Heart right ventricle (tissue), 16 donors: ENCODE measurements at regions of chr16 and their contacts with region 1.

Region 1: DNA sequence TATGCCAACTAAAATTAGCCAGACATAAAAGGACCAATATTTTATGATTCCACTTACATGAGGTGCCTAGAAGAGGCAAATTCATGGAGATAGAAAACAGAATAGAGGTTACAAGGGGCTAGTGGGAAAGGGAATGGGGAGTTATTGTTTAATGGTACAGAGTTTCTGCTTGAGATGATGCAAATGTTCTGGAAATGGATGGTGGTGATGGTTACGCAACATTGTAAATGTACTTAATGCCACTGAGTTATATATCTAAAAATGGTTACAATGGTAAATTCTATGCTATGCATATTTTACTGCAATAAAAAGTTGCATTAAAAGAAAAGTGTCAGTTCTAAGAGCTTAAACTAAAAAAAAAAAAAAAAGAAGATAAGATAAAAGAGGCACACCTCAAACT is 17.9 kb downstream of the MT1X start:
- DNase-seq: no peak
- ATAC-seq: no peak
- H3K4me3 ChIP-seq: no peak overlapping the region
- H3K27ac ChIP-seq: no peak overlapping the region
- H3K4me1 ChIP-seq: peaks cover 0 to 9% (median 0%) of the 10 kb centered on the region in 9 donors
- H3K27me3 ChIP-seq: no peaks in the 10 kb centered on the region
- CTCF ChIP-seq: no peak

Region 2: DNA sequence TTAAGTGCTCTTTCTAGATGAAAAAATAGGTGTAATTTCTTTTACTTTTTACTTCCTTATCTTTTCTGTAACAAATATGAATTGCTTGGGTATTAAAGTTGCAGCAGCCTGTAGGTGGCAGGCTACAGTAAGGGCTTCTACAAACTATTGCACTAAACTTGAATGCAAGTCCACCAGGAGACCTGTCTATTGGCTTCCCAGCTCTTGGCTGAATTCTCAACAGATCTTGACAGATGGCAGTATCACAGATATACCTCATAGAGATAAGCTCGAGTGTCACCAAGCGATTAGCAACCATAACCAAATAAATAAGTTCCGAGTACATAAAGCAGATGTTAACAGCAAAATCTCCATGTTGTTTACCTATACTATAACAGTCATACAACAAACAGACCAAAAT is 186.2 kb before region 1 on chr16:
- intact Hi-C with region 1: loop called (anchors 1 to 10 kb)
- DNase-seq: peak in 1 of 2 donors; percentile 36
- ATAC-seq: peak in 5 of 8 donors; percentile 55 to 80 (median 71)
- H3K4me3 ChIP-seq: no peak overlapping the region
- H3K27ac ChIP-seq: no peak overlapping the region
- H3K4me1 ChIP-seq: peaks cover 0 to 55% (median 34%) of the 10 kb centered on the region in 9 donors
- H3K27me3 ChIP-seq: no peaks in the 10 kb centered on the region
- CTCF ChIP-seq: peak; percentile 43 to 80 (median 68)

Region 3: GRCh38 chr16:56519459-56520250 is 180.5 kb before region 1 on chr16 and contains the start of gene BBS2:
- intact Hi-C with region 1: loop called (anchors 1 to 10 kb)
- DNase-seq: peak; percentile 90 to 94
- ATAC-seq: peak; percentile 96 to 99 (median 98)
- H3K4me3 ChIP-seq: peak within 1 kb of the TSS; percentile 71 to 99 (median 92)
- H3K27ac ChIP-seq: peak within 1 kb of the TSS; percentile 35 to 94 (median 90)
- H3K4me1 ChIP-seq: peaks cover 0 to 56% (median 38%) of the 10 kb centered on the region in 9 donors
- H3K27me3 ChIP-seq: no peaks in the 10 kb centered on the region
- CTCF ChIP-seq: peak in 1 of 9 donors; percentile 14
- total RNA-seq, gene BBS2: 37.7 to 75.9 (median 60.1) TPM

Region 4: GRCh38 chr16:56576585-56577293 is 123.5 kb before region 1 on chr16:
- intact Hi-C with region 1: loop called in 9 of 10 experiments (anchors 1 to 10 kb)
- DNase-seq: peak; percentile 59 to 78
- ATAC-seq: peak; percentile 43 to 92 (median 88)
- H3K4me3 ChIP-seq: no peak overlapping the region
- H3K27ac ChIP-seq: no peak overlapping the region
- H3K4me1 ChIP-seq: no peaks in the 10 kb centered on the region
- H3K27me3 ChIP-seq: peaks cover 0 to 2% (median 0%) of the 10 kb centered on the region in 7 donors
- CTCF ChIP-seq: peak; percentile 38 to 86 (median 71)

Region 5: GRCh38 chr16:56625140-56625942 is 74.9 kb before region 1 on chr16 and contains the start of gene MT1E:
- intact Hi-C with region 1: no loop called
- DNase-seq: peak; percentile 85 to 86
- ATAC-seq: peak; percentile 92 to 96 (median 94)
- H3K4me3 ChIP-seq: peak within 1 kb of the TSS; percentile 26 to 82 (median 67)
- H3K27ac ChIP-seq: peak within 1 kb of the TSS; percentile 76 to 98 (median 93)
- H3K4me1 ChIP-seq: peaks cover 0 to 29% (median 14%) of the 10 kb centered on the region in 9 donors
- H3K27me3 ChIP-seq: peaks cover 0 to 4% (median 0%) of the 10 kb centered on the region in 7 donors
- CTCF ChIP-seq: peak in 1 of 9 donors; percentile 2
- total RNA-seq, gene MT1E: 83.3 to 164 (median 97.0) TPM

Region 6: GRCh38 chr16:56673921-56674320 is 26.3 kb before region 1 on chr16:
- intact Hi-C with region 1: loop called in 2 of 10 experiments (anchors 1 to 2 kb)
- DNase-seq: no peak
- ATAC-seq: peak in 5 of 8 donors; percentile 38 to 66 (median 50)
- H3K4me3 ChIP-seq: no peak overlapping the region
- H3K27ac ChIP-seq: no peak overlapping the region
- H3K4me1 ChIP-seq: peaks cover 0 to 19% (median 14%) of the 10 kb centered on the region in 9 donors
- H3K27me3 ChIP-seq: peaks cover 6 to 80% (median 53%) of the 10 kb centered on the region in 7 donors
- CTCF ChIP-seq: peak; percentile 35 to 68 (median 61)

Region 7: GRCh38 chr16:56916571-56917403 is 216.6 kb after region 1 on chr16:
- intact Hi-C with region 1: no loop called
- DNase-seq: no peak
- ATAC-seq: peak in 5 of 8 donors; percentile 19 to 63 (median 53)
- H3K4me3 ChIP-seq: no peak overlapping the region
- H3K27ac ChIP-seq: peak overlapping the region in 8 of 10 donors; percentile 38 to 84 (median 63)
- H3K4me1 ChIP-seq: peaks cover 5 to 60% (median 40%) of the 10 kb centered on the region in 9 donors
- H3K27me3 ChIP-seq: no peaks in the 10 kb centered on the region
- CTCF ChIP-seq: no peak